ENCODE measurements at regions of chr19 and their contacts with region 1.

Region 1: GRCh38 chr19:50724522-50725217 is 1.5 kb downstream of the CLEC11A start:
- DNase-seq: peak; percentile 84 to 97 (median 94)
- ATAC-seq: peak; percentile 88
- H3K4me3 ChIP-seq: peak overlapping the region; percentile 56 to 81
- H3K4me3 Mint-ChIP-seq: peak overlapping the region; percentile 82
- H3K27ac ChIP-seq: peak overlapping the region; percentile 79 to 89
- H3K27ac Mint-ChIP-seq: peak overlapping the region; percentile 85
- H3K4me1 ChIP-seq: peaks cover 48% of the 10 kb centered on the region
- H3K4me1 Mint-ChIP-seq: peaks cover 46% of the 10 kb centered on the region
- H3K27me3 ChIP-seq: peaks cover 0 to 16% of the 10 kb centered on the region in 2 experiments
- H3K27me3 Mint-ChIP-seq: peaks cover 34% of the 10 kb centered on the region
- CTCF ChIP-seq: peak; percentile 71

Region 2: GRCh38 chr19:50383852-50384684 is 340.6 kb before region 1 on chr19 and contains the start of gene POLD1:
- CTCF ChIA-PET with region 1: no interaction called
- POLR2A ChIA-PET with region 1: interaction called, 3 read pairs
- intact Hi-C with region 1: loop called in 1 of 2 experiments (anchors 10 kb)
- DNase-seq: peak; percentile 98 to 100 (median 98)
- ATAC-seq: peak; percentile 93
- H3K4me3 ChIP-seq: peak within 1 kb of the TSS; percentile 70 to 79
- H3K4me3 Mint-ChIP-seq: peak within 1 kb of the TSS; percentile 97
- H3K27ac ChIP-seq: peak within 1 kb of the TSS; percentile 45 to 72
- H3K27ac Mint-ChIP-seq: peak within 1 kb of the TSS; percentile 91
- H3K4me1 ChIP-seq: peaks cover 14% of the 10 kb centered on the region
- H3K4me1 Mint-ChIP-seq: peaks cover 33% of the 10 kb centered on the region
- H3K27me3 ChIP-seq: no peaks in the 10 kb centered on the region
- H3K27me3 Mint-ChIP-seq: no peaks in the 10 kb centered on the region
- CTCF ChIP-seq: no peak
- total RNA-seq, gene POLD1: 19.4 to 21.8 TPM

Region 3: DNA sequence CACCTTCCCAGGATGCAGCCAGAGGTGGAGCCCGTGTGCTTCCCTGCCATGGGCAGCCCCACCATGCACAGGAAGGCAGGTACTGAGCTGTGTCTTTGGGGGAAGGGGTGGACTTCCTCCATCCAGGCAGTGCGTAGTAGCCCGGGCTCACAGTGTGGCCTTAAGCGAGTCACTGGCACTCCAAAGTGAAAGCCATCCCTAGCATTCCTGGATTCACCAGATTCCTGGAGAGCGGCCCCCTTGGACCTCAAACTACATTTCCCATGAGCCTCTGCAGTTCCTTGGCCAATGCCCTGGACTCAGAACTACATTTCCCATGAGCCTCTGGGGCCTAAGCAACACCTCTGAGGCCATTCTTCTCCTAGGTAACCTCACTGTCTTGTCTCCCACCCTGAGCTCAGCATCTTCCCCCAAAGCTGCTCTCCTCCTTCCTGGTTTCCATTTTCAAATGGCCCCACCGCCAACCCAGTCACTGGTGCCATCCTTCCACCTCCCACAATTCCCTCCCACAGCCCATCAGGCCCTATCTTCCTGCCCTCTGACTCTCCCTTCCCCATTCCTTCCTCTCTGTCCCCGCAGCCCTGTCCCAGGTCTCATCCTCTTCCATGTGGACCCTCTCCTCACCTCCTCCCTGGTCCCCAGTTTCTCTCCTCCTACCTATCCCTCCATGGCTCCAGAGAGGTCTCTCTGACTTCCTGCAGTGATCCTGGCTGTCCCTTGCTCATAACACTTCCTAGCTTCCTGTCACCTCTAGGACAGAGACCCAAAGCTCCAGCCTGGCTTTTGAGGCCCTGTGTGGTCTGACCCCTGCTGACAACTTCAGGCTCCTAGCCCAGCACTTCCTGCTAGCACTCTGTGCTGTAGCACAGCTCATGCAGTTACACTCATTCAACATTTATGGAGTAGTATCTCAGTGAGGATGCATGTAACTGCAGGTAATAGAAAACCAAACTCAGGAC is 75.0 kb before region 1 on chr19 and contains the start of gene C19orf81:
- CTCF ChIA-PET with region 1: no interaction called
- POLR2A ChIA-PET with region 1: no interaction called
- intact Hi-C with region 1: no loop called
- DNase-seq: no peak
- ATAC-seq: no peak
- H3K4me3 ChIP-seq: no peak within 1 kb of the TSS
- H3K4me3 Mint-ChIP-seq: no peak within 1 kb of the TSS
- H3K27ac ChIP-seq: no peak within 1 kb of the TSS
- H3K27ac Mint-ChIP-seq: no peak within 1 kb of the TSS
- H3K4me1 ChIP-seq: no peaks in the 10 kb centered on the region
- H3K4me1 Mint-ChIP-seq: no peaks in the 10 kb centered on the region
- H3K27me3 ChIP-seq: peaks cover 0 to 8% of the 10 kb centered on the region in 2 experiments
- H3K27me3 Mint-ChIP-seq: peaks cover 35% of the 10 kb centered on the region
- CTCF ChIP-seq: no peak
- total RNA-seq, gene C19orf81: not detected

Region 4: DNA sequence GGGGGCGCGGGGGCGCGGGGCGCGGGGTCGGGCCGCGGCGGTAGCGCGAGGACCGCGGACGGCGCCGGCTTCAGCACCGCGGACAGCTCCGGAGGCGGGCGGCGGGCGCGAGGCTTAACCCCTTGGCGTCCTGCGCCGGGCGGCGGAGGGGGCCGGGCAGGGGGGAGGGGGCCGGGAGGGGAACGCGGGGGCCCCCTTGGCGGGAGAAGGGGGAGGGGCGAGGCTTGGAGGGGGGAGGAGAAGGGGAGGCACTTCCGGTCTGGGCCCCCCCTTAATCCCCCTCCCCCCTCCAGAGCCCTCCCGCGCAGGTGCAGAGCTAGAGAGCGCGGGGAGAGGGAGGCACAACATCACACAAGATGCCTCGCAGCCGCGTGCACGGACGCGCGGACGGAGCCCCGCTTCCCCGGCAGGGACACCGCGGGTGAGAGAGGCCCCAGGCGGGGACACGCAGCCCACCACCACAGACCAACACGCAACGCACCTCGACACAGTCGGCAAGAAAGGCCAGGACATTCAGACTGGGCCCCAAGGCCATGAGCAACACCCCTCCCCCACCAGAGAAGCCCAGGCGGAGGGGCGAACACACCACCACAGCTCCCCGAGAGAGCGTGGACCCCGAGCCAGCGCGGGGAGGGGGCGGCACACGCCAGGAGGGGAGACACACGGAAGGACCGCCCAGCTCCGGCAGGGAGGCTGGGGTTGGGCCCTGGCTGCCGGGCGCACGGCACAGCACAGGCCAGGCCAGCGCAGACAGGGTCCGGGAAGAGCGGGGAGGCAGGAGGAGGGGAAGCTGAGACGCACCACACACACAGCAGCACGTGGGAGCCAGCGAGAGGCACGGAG is 29.2 kb before region 1 on chr19:
- CTCF ChIA-PET with region 1: no interaction called
- POLR2A ChIA-PET with region 1: no interaction called
- intact Hi-C with region 1: no loop called
- DNase-seq: peak in 3 of 9 experiments; percentile 33 to 52 (median 43)
- ATAC-seq: peak; percentile 54
- H3K4me3 ChIP-seq: no peak overlapping the region
- H3K4me3 Mint-ChIP-seq: no peak overlapping the region
- H3K27ac ChIP-seq: no peak overlapping the region
- H3K27ac Mint-ChIP-seq: no peak overlapping the region
- H3K4me1 ChIP-seq: no peaks in the 10 kb centered on the region
- H3K4me1 Mint-ChIP-seq: no peaks in the 10 kb centered on the region
- H3K27me3 ChIP-seq: peaks cover 16 to 27% of the 10 kb centered on the region in 2 experiments
- H3K27me3 Mint-ChIP-seq: peaks cover 59% of the 10 kb centered on the region
- CTCF ChIP-seq: no peak

Region 5: GRCh38 chr19:50705422-50706019 is 19.1 kb before region 1 on chr19:
- CTCF ChIA-PET with region 1: interaction called, 10 read pairs
- POLR2A ChIA-PET with region 1: no interaction called
- intact Hi-C with region 1: loop called in 1 of 2 experiments (anchors 1 kb)
- DNase-seq: peak in 6 of 9 experiments; percentile 13 to 63 (median 39)
- ATAC-seq: peak; percentile 75
- H3K4me3 ChIP-seq: no peak overlapping the region
- H3K4me3 Mint-ChIP-seq: no peak overlapping the region
- H3K27ac ChIP-seq: no peak overlapping the region
- H3K27ac Mint-ChIP-seq: no peak overlapping the region
- H3K4me1 ChIP-seq: peaks cover 7% of the 10 kb centered on the region
- H3K4me1 Mint-ChIP-seq: no peaks in the 10 kb centered on the region
- H3K27me3 ChIP-seq: peaks cover 0 to 3% of the 10 kb centered on the region in 2 experiments
- H3K27me3 Mint-ChIP-seq: peaks cover 25% of the 10 kb centered on the region
- CTCF ChIP-seq: peak; percentile 51

Region 6: DNA sequence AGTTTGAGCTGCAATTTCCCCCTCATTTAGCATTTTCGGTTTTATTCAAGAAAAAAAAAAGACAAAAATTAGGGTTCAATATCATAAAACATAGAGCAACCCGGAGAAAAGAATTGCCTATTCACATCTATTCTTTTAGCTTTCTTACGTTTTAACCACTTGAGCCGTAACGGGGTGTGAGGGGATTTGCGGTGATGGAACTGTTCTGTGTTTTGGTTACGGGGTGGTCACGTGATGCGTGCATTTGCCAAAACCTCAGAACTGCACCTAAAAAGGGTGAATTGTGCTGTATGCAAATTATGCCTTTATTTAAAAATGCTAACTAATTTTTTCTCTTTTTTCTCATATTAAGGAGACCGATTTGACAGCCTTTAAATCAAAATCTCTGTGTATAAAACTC is 20.6 kb after region 1 on chr19:
- CTCF ChIA-PET with region 1: no interaction called
- POLR2A ChIA-PET with region 1: no interaction called
- intact Hi-C with region 1: no loop called
- DNase-seq: no peak
- ATAC-seq: no peak
- H3K4me3 ChIP-seq: no peak overlapping the region
- H3K4me3 Mint-ChIP-seq: no peak overlapping the region
- H3K27ac ChIP-seq: no peak overlapping the region
- H3K27ac Mint-ChIP-seq: no peak overlapping the region
- H3K4me1 ChIP-seq: no peaks in the 10 kb centered on the region
- H3K4me1 Mint-ChIP-seq: no peaks in the 10 kb centered on the region
- H3K27me3 ChIP-seq: no peaks in the 10 kb centered on the region
- H3K27me3 Mint-ChIP-seq: peaks cover 26% of the 10 kb centered on the region
- CTCF ChIP-seq: no peak

Region 7: DNA sequence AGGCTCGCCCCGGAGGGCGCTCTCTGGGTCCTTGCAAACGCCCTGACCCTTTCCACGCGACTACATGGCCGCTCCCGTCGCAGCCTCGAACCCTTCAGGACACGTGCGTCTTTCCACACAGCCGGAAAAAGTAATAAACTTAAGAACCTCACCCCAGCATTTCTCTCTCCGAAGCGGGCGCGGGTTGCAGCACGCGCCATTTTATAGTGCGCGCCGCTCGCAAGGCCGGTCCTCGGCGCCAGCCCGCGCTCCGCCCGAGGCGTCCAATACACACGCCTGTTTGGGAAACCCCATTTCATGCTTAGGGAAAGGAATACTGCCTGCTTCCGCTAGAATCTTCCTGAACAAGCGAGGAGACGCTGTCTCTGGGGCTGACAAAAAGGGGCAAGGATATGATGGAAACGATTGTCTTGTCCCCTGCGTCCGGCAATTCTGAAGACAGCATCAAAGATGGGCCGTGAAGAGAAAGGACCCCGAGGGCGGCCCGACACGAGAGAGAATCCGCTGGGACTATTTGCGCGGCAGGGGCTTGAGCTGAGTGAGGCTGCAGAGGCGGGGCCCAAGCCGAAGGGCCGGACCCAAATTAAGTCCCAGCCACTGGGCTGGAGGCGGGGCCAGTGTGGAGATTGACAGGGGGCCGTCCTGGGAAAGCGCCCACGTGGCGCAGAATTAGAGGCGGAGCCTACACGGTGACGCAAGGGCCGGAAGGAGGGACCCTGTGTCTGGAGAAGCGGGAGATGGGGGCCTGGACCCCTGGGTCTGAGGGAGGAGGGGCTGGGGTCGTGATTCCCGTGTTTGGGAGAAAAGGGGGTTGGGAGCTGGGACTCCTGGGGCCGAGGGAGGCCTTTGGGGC is 80.0 kb after region 1 on chr19:
- CTCF ChIA-PET with region 1: no interaction called
- POLR2A ChIA-PET with region 1: interaction called, 9 read pairs
- intact Hi-C with region 1: loop called (anchors 1 kb)
- DNase-seq: peak; percentile 91 to 99 (median 96)
- ATAC-seq: peak; percentile 95
- H3K4me3 ChIP-seq: peak overlapping the region; percentile 91 to 96
- H3K4me3 Mint-ChIP-seq: peak overlapping the region; percentile 98
- H3K27ac ChIP-seq: peak overlapping the region; percentile 99
- H3K27ac Mint-ChIP-seq: peak overlapping the region; percentile 100
- H3K4me1 ChIP-seq: peaks cover 18% of the 10 kb centered on the region
- H3K4me1 Mint-ChIP-seq: peaks cover 43% of the 10 kb centered on the region
- H3K27me3 ChIP-seq: no peaks in the 10 kb centered on the region
- H3K27me3 Mint-ChIP-seq: no peaks in the 10 kb centered on the region
- CTCF ChIP-seq: no peak